ENCODE measurements at regions of chr21 and their contacts with region 1.

Region 1: DNA sequence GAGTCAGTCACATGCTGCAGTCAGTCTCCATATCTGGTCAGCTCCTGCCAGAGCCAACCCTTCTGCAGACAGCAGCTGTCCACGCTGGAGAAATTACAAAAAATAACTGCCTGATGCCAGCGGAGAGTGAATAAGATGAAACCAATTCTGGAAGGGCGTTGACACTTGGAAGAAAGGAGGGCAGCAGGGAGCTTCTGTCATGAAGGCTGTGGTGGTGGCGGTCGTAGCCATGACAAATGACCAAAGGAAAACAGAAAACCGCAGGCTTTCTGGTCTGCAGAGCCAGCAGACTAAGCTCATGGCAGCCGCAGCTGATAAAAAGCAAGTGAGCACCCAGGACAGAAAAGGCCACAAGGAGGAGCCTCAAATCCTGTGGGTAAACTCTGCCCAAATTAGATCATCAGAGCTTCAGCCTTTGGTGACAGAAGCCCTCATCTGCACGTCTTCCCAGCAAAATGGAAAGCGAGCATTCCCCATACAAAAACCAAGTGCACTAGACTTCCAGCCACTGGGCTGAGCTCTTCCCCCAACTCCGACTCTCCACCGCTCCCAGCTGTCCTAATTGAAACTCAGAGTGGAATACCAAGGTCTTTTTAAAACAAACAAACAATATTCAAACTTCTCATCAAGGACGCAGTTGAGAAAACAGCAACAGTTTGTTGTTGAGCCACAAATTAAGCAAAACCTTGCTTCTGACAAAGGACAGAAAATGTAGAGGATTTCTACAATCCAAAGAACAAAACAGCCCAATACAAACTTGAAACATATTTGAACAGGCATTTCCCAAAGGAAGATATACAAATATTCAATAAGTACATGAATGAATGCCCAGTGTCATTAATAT is 28.7 kb downstream of the RSPH1 start:
- DNase-seq: peak; percentile 28
- H3K4me3 Mint-ChIP-seq: no peak overlapping the region
- H3K27ac Mint-ChIP-seq: no peak overlapping the region
- H3K4me1 Mint-ChIP-seq: peaks cover 38% of the 10 kb centered on the region
- H3K27me3 Mint-ChIP-seq: no peaks in the 10 kb centered on the region

Region 2: DNA sequence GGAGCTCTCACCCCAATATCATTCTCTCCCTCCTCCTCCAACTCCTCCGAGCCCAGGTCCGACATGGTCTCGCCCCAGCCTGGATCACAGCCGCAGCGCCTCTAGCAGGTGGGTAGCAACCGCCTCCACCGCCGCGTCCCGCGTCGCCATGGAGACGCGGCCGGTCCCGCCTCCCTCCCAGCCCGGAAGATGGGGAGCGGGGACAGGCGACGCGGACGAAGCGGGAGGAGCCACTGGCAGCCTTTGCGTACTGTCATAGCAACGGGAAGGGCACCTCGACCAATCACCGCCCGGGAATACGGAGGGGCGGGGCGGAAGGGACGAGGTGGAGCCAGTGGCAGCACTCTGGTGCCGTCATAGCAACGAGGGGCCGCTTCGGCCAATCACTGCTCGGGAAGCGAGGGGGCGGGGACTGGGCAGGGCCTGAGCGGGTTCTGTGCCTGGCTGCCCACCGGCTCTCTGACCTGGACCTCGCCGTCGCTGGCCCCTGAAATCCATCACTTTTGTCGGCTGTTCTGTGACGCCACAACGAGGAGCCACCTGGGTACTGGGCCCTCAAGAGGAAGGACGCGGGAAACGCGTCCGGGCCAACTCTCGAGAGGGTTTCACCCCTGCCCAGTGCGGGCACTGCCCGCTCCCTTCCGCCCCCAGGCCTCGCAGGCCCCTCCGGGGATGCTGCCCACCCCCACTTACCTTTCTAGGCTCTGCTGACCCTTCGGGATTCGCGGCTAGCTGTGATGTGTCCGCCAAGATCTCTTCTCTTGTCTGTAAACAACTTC is 28.9 kb after region 1 on chr21 and contains the start of gene RSPH1:
- CTCF ChIA-PET with region 1: no interaction called
- POLR2A ChIA-PET with region 1: no interaction called
- intact Hi-C with region 1: loop called (anchors 2 kb)
- DNase-seq: peak; percentile 100
- H3K4me3 Mint-ChIP-seq: peak within 1 kb of the TSS; percentile 90
- H3K27ac Mint-ChIP-seq: peak within 1 kb of the TSS; percentile 67
- H3K4me1 Mint-ChIP-seq: peaks cover 21% of the 10 kb centered on the region
- H3K27me3 Mint-ChIP-seq: peaks cover 1% of the 10 kb centered on the region
- total RNA-seq, gene RSPH1: 0.38 to 0.53 TPM

Region 3: GRCh38 chr21:42537106-42537742 is 69.9 kb after region 1 on chr21:
- CTCF ChIA-PET with region 1: no interaction called
- POLR2A ChIA-PET with region 1: no interaction called
- intact Hi-C with region 1: loop called (anchors 2 kb)
- DNase-seq: peak; percentile 43
- H3K4me3 Mint-ChIP-seq: no peak overlapping the region
- H3K27ac Mint-ChIP-seq: no peak overlapping the region
- H3K4me1 Mint-ChIP-seq: peaks cover 7% of the 10 kb centered on the region
- H3K27me3 Mint-ChIP-seq: no peaks in the 10 kb centered on the region

Region 4: GRCh38 chr21:42799516-42799915 is 332.2 kb after region 1 on chr21:
- CTCF ChIA-PET with region 1: no interaction called
- POLR2A ChIA-PET with region 1: no interaction called
- intact Hi-C with region 1: loop called (anchors 10 kb)
- DNase-seq: peak; percentile 71
- H3K4me3 Mint-ChIP-seq: no peak overlapping the region
- H3K27ac Mint-ChIP-seq: peak overlapping the region; percentile 5
- H3K4me1 Mint-ChIP-seq: peaks cover 14% of the 10 kb centered on the region
- H3K27me3 Mint-ChIP-seq: peaks cover 8% of the 10 kb centered on the region

Measured in activated CD4-positive, alpha-beta memory T cell treated with anti-CD3 and anti-CD28 coated beads for 36 hours (primary cell).